Activated CD8-positive, alpha-beta T cell treated with anti-CD3 and anti-CD28 coated beads, Interleukin-2, amount 10 ng/mL, durations not matched to agents 7 days and 5 days (primary cell): ENCODE measurements at regions of chr7 and their contacts with region 1.

Region 1: GRCh38 chr7:73606801-73607691 is 17.3 kb downstream of the MLXIPL start:
- DNase-seq: peak; percentile 71
- ATAC-seq: peak; percentile 83
- H3K4me3 Mint-ChIP-seq: no peak overlapping the region
- H3K27ac Mint-ChIP-seq: no peak overlapping the region
- H3K4me1 Mint-ChIP-seq: peaks cover 3% of the 10 kb centered on the region
- H3K27me3 Mint-ChIP-seq: peaks cover 11% of the 10 kb centered on the region

Region 2: DNA sequence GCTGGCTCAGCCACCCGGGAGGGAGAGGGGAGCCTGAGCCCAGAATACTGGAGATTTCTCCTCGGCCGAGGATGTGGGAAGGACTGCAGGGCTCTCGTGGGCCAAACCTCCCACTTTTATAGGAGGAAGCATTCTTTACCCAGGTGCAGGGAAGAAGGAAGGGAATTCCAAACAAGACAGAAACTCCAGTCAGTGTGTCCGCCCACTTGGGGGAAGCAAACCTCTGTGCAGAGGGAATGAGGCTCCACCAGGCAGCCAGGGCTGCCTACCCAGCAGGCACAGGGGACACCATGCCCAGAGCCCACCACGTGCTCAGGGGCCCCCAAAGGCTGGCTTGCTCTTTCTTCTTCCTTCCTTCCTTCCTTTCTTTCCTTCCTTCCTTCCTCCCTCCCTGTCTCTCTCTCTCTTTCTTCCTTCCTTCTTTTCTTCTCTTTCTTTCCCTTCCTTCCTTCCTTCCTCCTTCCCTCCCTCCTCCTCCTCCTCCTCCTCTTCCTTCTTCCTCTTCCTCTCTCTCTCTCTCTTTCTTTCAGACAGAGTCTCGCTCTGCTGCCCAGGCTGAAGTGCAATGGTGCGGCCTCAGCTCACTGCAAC is 188.8 kb before region 1 on chr7:
- CTCF ChIA-PET with region 1: no interaction called
- POLR2A ChIA-PET with region 1: no interaction called
- DNase-seq: no peak
- ATAC-seq: no peak
- H3K4me3 Mint-ChIP-seq: no peak overlapping the region
- H3K27ac Mint-ChIP-seq: no peak overlapping the region
- H3K4me1 Mint-ChIP-seq: peaks cover 3% of the 10 kb centered on the region
- H3K27me3 Mint-ChIP-seq: no peaks in the 10 kb centered on the region

Region 3: GRCh38 chr7:73621168-73622063 is 14.4 kb after region 1 on chr7:
- CTCF ChIA-PET with region 1: interaction called, 12 read pairs
- POLR2A ChIA-PET with region 1: interaction called, 3 read pairs
- DNase-seq: no peak
- ATAC-seq: no peak
- H3K4me3 Mint-ChIP-seq: no peak overlapping the region
- H3K27ac Mint-ChIP-seq: no peak overlapping the region
- H3K4me1 Mint-ChIP-seq: peaks cover 3% of the 10 kb centered on the region
- H3K27me3 Mint-ChIP-seq: peaks cover 35% of the 10 kb centered on the region

Region 4: GRCh38 chr7:73628504-73628903 is 21.5 kb after region 1 on chr7:
- CTCF ChIA-PET with region 1: interaction called, 14 read pairs
- POLR2A ChIA-PET with region 1: no interaction called
- DNase-seq: no peak
- ATAC-seq: no peak
- H3K4me3 Mint-ChIP-seq: no peak overlapping the region
- H3K27ac Mint-ChIP-seq: no peak overlapping the region
- H3K4me1 Mint-ChIP-seq: peaks cover under 1% of the 10 kb centered on the region
- H3K27me3 Mint-ChIP-seq: peaks cover 34% of the 10 kb centered on the region

Region 5: GRCh38 chr7:73718905-73719805 is 112.1 kb after region 1 on chr7 and contains the start of gene STX1A:
- CTCF ChIA-PET with region 1: interaction called, 69 read pairs
- POLR2A ChIA-PET with region 1: no interaction called
- DNase-seq: peak; percentile 75
- ATAC-seq: peak; percentile 84
- H3K4me3 Mint-ChIP-seq: peak within 1 kb of the TSS; percentile 80
- H3K27ac Mint-ChIP-seq: peak within 1 kb of the TSS; percentile 15
- H3K4me1 Mint-ChIP-seq: peaks cover 36% of the 10 kb centered on the region
- H3K27me3 Mint-ChIP-seq: peaks cover 21% of the 10 kb centered on the region
- total RNA-seq, gene STX1A: 10.6 to 12.3 TPM

Region 6: GRCh38 chr7:73726083-73726466 is 119.0 kb after region 1 on chr7:
- CTCF ChIA-PET with region 1: interaction called, 69 read pairs
- POLR2A ChIA-PET with region 1: no interaction called
- DNase-seq: no peak
- ATAC-seq: peak; percentile 43
- H3K4me3 Mint-ChIP-seq: no peak overlapping the region
- H3K27ac Mint-ChIP-seq: no peak overlapping the region
- H3K4me1 Mint-ChIP-seq: no peaks in the 10 kb centered on the region
- H3K27me3 Mint-ChIP-seq: peaks cover 18% of the 10 kb centered on the region